Posterior vena cava (tissue), 2 donors: ENCODE measurements at regions of chr11 and their contacts with region 1.

Region 1: GRCh38 chr11:127919206-127920000 is 668.0 kb downstream of the ETS1 start:
- DNase-seq: no peak

Region 2: GRCh38 chr11:126997196-126997595 is 922.2 kb before region 1 on chr11:
- intact Hi-C with region 1: loop called in 1 of 2 experiments (anchors 5 kb)
- DNase-seq: no peak